AG04450 (cell line): ENCODE measurements at regions of chrX and their contacts with region 1.

Region 1: DNA sequence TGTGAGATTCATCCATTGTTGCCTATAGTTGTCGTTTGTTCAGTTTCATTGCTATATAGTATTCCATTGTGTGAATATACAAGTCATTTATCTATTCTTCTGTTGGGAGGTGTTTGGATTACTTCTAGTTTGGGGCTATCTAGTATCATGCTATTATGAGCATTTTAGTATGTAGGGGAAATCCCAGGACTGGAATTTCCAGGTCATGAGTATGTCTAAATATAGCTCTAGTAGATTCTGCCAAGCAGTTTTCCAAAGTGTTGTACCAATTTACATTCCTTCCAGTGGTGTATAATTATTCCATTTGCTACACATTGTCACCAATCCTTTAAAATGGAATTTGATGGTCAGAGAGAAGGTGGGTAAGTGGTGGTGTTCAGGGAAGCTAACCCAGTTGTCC is 30.1 kb downstream of the EGFL6 start:
- DNase-seq: no peak
- H3K4me3 ChIP-seq: no peak overlapping the region
- H3K27ac ChIP-seq: no peak overlapping the region
- H3K27me3 ChIP-seq: no peaks in the 10 kb centered on the region
- CTCF ChIP-seq: no peak

Region 2: DNA sequence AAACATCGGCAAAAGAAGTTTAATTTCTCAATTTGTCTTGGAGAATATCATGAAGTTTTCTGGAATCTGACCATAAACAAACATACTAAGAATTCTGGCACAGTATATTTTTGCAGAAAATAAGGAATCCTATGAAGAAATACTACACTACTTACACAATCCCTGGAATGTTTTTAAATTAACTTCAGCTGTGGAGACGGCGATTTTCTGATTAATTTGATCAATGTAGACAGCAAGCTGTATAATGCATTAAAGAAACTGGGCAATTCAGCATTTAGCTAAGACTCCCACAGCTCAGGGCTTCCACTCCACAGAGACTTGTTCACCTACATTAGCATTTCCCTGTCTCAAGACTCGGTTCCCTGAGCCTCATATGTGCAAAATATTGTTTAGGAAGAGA is 17.9 kb before region 1 on chrX:
- CTCF ChIA-PET with region 1: no interaction called
- POLR2A ChIA-PET with region 1: interaction called, 10 read pairs
- DNase-seq: no peak
- H3K4me3 ChIP-seq: no peak overlapping the region
- H3K27ac ChIP-seq: no peak overlapping the region
- H3K27me3 ChIP-seq: no peaks in the 10 kb centered on the region
- CTCF ChIP-seq: no peak

Region 3: DNA sequence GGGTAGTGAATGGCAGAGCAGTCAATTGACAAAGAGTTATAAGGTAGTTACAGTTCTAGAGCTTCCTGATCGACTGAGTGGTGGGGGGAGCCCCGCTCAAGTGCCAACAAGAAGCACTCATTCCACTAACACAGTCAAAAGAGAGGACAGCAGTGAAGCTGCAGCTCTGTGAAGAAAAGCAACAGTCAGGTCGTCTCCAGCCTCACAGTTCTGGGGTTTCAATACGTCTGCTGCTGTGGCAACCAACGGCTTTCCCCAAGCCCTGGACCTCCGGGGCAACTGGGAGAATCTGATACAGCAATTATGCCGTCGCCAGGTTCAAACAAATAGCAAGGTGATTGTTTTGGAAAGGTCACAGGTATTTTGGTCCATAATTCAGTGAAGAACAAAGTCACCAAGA is 186.6 kb after region 1 on chrX:
- CTCF ChIA-PET with region 1: no interaction called
- POLR2A ChIA-PET with region 1: no interaction called
- DNase-seq: no peak
- H3K4me3 ChIP-seq: no peak overlapping the region
- H3K27ac ChIP-seq: no peak overlapping the region
- H3K27me3 ChIP-seq: no peaks in the 10 kb centered on the region
- CTCF ChIP-seq: no peak